Naive thymus-derived CD4-positive, alpha-beta T cell (primary cell): ENCODE measurements at regions of chr1 and their contacts with region 1.

Region 1: DNA sequence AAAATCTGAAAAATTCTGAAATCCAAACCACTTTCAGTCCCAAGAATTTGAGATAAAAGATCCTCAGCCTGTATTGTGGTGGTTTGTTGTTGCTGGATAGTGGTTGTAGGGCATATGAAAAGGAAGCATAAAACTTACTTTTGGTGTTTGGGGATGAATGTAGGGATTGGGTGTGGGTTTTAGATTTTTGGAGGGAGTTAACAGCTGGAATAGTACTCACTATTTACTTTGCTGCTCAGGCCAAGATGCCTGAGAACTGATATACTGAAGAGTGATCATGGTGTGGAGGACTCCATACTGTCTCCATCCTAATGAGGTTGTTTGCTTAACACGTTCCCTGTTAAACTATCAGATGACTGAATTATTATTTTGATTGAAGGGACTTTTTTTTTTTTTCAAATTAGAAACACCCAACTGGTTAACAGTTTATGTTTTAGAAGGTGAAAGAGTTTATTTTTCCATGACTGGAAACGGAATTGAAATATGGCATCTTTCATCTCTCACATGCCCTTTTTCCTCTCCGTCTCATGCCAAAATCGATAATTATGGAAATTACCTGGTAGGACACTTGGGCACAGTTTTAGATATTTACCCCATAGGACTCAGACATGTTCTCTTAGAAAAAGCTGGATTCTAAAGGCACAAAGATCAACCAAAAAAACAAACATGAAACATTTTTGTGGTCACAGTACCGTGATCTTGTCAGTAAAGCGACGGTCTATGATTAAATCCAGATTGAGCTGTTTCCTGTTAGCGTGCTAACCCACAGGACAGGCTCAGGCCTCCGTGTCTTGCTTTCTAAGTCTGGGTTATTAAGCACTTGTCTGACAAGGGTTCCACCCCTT is 37.3 kb downstream of the RGL1 start:
- DNase-seq: peak in 4 of 9 donors; percentile 2 to 20 (median 6)
- ATAC-seq: no peak
- H3K4me3 ChIP-seq: no peak overlapping the region
- H3K4me3 Mint-ChIP-seq: peak overlapping the region in 9 of 10 donors; percentile 40 to 74 (median 54)
- H3K27ac ChIP-seq: no peak overlapping the region
- H3K27ac Mint-ChIP-seq: peak overlapping the region in 8 of 9 donors; percentile 30 to 90 (median 46)
- H3K4me1 ChIP-seq: peaks cover 0 to 3% of the 10 kb centered on the region in 2 donors
- H3K4me1 Mint-ChIP-seq: peaks cover 5 to 38% (median 20%) of the 10 kb centered on the region in 7 donors
- H3K27me3 ChIP-seq: no peaks in the 10 kb centered on the region
- H3K27me3 Mint-ChIP-seq: no peaks in the 10 kb centered on the region

Region 2: DNA sequence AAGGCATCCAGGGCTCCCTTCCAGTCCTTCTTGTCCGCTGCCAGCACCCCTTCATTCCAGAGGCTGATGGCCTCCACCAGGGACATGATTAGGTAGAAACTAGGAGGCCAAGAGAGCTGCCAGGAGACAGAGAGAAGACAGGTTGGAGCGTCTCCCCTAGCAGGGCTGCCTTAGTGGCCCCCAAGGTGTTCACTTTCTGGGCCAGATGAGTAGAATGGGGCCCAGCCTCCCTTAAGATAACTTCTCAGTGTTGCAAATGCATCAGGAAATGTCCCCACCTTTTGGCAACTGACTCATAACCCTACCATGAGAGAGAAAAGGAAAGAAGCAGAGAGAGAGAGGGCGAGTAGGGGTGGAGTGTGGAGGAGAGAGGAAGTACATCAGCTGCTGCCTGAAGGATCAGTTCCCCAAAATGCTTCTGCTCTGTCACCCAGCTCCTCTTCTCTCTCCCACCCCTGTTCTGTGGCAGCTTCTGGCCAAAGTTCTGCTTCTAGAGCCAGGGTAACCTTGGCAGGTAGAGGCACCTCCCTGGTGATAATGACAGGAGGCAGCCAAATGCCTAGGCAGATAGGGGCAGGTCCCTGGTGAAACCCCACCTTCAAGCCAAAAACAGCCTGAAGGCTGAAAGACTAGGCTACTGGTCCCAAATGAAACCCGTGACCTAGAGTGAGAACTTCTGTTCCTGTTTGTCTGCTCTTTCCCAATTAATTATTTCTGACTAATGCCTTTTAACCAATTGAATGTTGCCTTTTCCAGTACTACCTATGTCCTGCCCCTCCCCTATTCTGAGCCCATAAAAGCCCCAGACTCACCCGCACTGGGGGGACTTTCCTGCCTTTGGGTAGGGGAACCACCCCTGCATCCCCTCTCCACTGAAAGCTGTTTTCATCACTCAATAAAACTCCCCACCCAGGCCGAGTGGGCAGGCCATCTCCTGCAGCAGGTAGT is 251.7 kb before region 1 on chr1 and contains the start of gene NCF2:
- CTCF ChIA-PET with region 1: no interaction called
- POLR2A ChIA-PET with region 1: no interaction called
- intact Hi-C with region 1: loop called in 1 of 2 experiments (anchors 5 kb)
- DNase-seq: peak in 1 of 9 donors; percentile 46
- ATAC-seq: peak; percentile 90
- H3K4me3 ChIP-seq: no peak within 1 kb of the TSS
- H3K4me3 Mint-ChIP-seq: peak within 1 kb of the TSS in 5 of 10 donors; percentile 20 to 81 (median 25)
- H3K27ac ChIP-seq: no peak within 1 kb of the TSS
- H3K27ac Mint-ChIP-seq: peak within 1 kb of the TSS in 4 of 9 donors; percentile 36 to 87 (median 64)
- H3K4me1 ChIP-seq: peaks cover 3 to 9% of the 10 kb centered on the region in 2 donors
- H3K4me1 Mint-ChIP-seq: peaks cover 0 to 44% (median 19%) of the 10 kb centered on the region in 7 donors
- H3K27me3 ChIP-seq: no peaks in the 10 kb centered on the region
- H3K27me3 Mint-ChIP-seq: peaks cover 0 to 5% (median 0%) of the 10 kb centered on the region in 5 donors
- total RNA-seq, gene NCF2: 2.2 to 145 (median 15.2) TPM

Region 3: GRCh38 chr1:183804881-183805841 is 37.0 kb before region 1 on chr1 and contains the start of gene RGL1:
- CTCF ChIA-PET with region 1: no interaction called
- POLR2A ChIA-PET with region 1: no interaction called
- intact Hi-C with region 1: loop called in 1 of 2 experiments (anchors 2 kb)
- DNase-seq: peak in 7 of 9 donors; percentile 10 to 43 (median 14)
- ATAC-seq: peak; percentile 77
- H3K4me3 ChIP-seq: peak within 1 kb of the TSS; percentile 55
- H3K4me3 Mint-ChIP-seq: peak within 1 kb of the TSS; percentile 84 to 98 (median 89)
- H3K27ac ChIP-seq: no peak within 1 kb of the TSS
- H3K27ac Mint-ChIP-seq: peak within 1 kb of the TSS in 4 of 9 donors; percentile 19 to 55 (median 36)
- H3K4me1 ChIP-seq: peaks cover 0 to 5% of the 10 kb centered on the region in 2 donors
- H3K4me1 Mint-ChIP-seq: peaks cover 10 to 20% (median 17%) of the 10 kb centered on the region in 7 donors
- H3K27me3 ChIP-seq: no peaks in the 10 kb centered on the region
- H3K27me3 Mint-ChIP-seq: peaks cover 5 to 25% (median 15%) of the 10 kb centered on the region in 5 donors
- total RNA-seq, gene RGL1: 0.98 to 6.2 (median 4.0) TPM